ENCODE measurements at regions of chr10 and their contacts with region 1.

Region 1: DNA sequence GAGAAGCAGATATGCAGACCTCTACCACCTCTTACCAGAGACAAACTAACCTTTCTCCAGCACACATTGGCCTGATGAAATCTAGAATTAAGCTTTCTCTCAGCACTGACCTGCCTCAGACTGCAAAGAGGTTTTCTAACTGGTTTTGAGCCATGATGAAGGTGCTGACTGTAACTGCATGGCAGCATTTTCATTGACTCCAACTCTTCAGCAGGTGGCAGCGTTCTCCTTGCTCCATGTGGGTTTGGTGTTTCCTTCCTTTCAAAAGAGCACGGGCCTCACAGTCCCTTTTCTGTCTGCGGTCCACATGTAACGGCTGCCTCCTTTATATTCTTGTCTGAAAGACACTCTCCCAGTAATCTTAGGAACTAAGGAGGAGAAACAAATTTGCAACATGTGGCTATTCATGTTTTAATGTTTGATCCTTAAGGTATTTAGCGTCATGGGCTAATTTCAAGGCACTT is 12.6 kb downstream of the KLLN start:
- DNase-seq: no peak

Region 2: GRCh38 chr10:87700031-87700796 is 150.6 kb before region 1 on chr10:
- intact Hi-C with region 1: no loop called
- DNase-seq: no peak

Region 3: GRCh38 chr10:88386821-88387773 is 536.3 kb after region 1 on chr10:
- intact Hi-C with region 1: loop called in 1 of 2 experiments (anchors 5 kb)
- DNase-seq: no peak

Region 4: DNA sequence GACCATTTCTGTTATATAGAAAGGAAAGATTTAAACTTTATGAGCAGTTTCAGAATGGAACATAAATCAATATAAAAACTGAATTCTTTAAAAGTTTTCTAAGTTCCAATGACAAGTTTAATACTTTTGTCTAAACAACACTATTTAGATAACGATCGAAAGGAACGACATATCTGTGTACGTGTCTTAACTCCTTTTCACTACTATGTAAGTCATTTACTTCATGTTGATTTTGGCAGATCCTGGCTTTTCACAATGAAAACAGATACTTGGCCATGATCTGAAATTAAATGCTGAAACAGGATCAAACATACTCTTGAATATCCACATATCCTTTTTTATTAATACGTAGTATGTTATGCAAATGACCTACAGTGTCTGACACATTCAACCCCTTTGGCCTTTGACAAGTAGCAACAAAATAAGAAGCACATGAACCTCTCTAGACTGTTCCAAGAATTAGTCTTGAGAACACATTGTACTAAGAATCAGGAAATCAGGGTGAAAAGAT is 690.4 kb after region 1 on chr10:
- intact Hi-C with region 1: loop called in 1 of 2 experiments (anchors 10 kb)
- DNase-seq: no peak

Measured in posterior vena cava (tissue), 2 donors.